CD8-positive, alpha-beta T cell (primary cell): ENCODE measurements at regions of chr2 and their contacts with region 1.

Region 1: DNA sequence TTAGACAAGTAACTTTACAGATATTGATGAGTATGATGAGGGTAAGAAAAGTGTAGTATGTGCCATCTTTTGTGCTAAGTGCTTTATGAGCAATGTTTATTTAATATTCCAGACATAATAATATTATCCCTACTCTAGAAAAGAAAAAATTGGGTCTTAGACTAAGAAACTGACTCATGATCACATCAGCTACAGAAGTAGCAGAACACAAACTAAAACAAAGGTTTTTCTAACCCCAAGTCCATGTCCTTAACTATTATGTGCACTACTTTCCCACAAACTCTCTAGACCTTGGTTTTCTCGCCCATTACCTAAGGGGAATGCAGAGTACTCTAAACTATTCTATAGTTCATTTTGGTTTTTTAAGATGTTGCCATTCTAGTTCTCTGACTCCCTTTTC is 64.5 kb downstream of the BAZ2B start:
- DNase-seq: no peak
- ATAC-seq: no peak
- H3K4me3 ChIP-seq: no peak overlapping the region
- H3K4me3 Mint-ChIP-seq: no peak overlapping the region
- H3K27ac ChIP-seq: no peak overlapping the region
- H3K27ac Mint-ChIP-seq: no peak overlapping the region
- H3K4me1 ChIP-seq: no peaks in the 10 kb centered on the region
- H3K4me1 Mint-ChIP-seq: no peaks in the 10 kb centered on the region
- H3K27me3 ChIP-seq: no peaks in the 10 kb centered on the region
- H3K27me3 Mint-ChIP-seq: no peaks in the 10 kb centered on the region
- CTCF ChIP-seq: no peak

Region 2: DNA sequence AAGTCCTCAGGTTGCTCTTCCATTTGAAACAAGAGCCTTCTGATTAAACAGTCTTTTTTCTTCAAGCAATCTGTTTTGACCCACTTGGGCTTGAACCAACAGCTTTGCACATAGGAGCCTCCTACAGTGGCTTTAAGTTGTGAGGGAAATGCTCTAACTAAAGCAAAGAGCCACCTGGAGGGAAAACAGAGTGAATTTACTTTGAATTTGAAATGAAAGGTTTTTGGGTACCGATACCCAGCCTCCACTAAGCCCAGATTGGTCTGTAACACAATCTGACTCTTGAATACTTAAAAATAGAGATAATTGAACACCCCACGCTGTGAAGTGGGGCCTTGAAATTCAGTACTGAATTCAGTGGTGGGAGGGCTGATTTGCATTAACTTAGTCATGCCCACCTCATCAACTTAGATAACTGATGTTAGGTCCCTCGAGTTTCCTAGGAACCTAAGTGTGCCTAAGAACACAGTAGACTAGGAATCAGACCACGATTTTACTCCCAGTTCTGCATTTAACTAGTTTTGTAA is 1866.8 kb before region 1 on chr2:
- CTCF ChIA-PET with region 1: no interaction called
- POLR2A ChIA-PET with region 1: no interaction called
- intact Hi-C with region 1: loop called in 1 of 2 experiments (anchors 5 kb)
- DNase-seq: no peak
- ATAC-seq: no peak
- H3K4me3 ChIP-seq: no peak overlapping the region
- H3K4me3 Mint-ChIP-seq: no peak overlapping the region
- H3K27ac ChIP-seq: no peak overlapping the region
- H3K27ac Mint-ChIP-seq: no peak overlapping the region
- H3K4me1 ChIP-seq: no peaks in the 10 kb centered on the region
- H3K4me1 Mint-ChIP-seq: no peaks in the 10 kb centered on the region
- H3K27me3 ChIP-seq: no peaks in the 10 kb centered on the region
- H3K27me3 Mint-ChIP-seq: peaks cover 2% of the 10 kb centered on the region
- CTCF ChIP-seq: no peak